ENCODE measurements at regions of chr5 and their contacts with region 1.

Region 1: GRCh38 chr5:39177631-39177964 is 41.8 kb downstream of the FYB1 start:
- DNase-seq: peak; percentile 83
- H3K4me3 Mint-ChIP-seq: peak overlapping the region; percentile 75
- H3K27ac Mint-ChIP-seq: peak overlapping the region; percentile 93
- H3K4me1 Mint-ChIP-seq: peaks cover 88% of the 10 kb centered on the region
- H3K27me3 Mint-ChIP-seq: no peaks in the 10 kb centered on the region

Region 2: GRCh38 chr5:37722236-37723146 is 1455.1 kb before region 1 on chr5:
- intact Hi-C with region 1: loop called (anchors 5 kb)
- DNase-seq: peak; percentile 83
- H3K4me3 Mint-ChIP-seq: peak overlapping the region; percentile 81
- H3K27ac Mint-ChIP-seq: peak overlapping the region; percentile 95
- H3K4me1 Mint-ChIP-seq: peaks cover 29% of the 10 kb centered on the region
- H3K27me3 Mint-ChIP-seq: no peaks in the 10 kb centered on the region

Region 3: DNA sequence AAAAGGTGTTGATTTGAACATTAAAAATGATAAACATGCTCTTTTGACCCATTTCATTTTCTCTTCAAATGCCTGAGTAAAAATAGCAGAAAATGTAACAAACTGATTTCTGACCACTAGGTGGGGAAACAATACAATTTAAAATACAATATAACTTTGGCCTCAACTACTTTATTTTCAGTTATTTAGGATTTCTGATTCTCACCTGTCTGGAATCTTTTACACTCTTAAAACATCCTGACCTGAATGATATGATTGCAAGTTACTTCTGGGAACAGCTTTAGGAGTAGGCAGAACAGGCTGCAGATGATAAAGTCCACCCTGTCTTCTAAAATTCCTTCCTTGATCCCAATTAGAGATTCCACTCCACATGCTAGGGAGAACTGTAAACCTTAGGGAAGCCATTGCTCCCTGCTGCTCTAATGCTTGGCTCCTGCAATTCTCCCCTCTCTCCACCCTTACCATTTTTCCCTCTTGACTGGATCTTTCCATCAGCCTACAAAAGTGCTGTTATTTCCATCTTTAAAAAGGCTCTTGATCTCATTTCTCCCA is 28.5 kb before region 1 on chr5:
- intact Hi-C with region 1: loop called (anchors 1 kb)
- DNase-seq: no peak
- H3K4me3 Mint-ChIP-seq: no peak overlapping the region
- H3K27ac Mint-ChIP-seq: peak overlapping the region; percentile 68
- H3K4me1 Mint-ChIP-seq: peaks cover 43% of the 10 kb centered on the region
- H3K27me3 Mint-ChIP-seq: no peaks in the 10 kb centered on the region

Region 4: DNA sequence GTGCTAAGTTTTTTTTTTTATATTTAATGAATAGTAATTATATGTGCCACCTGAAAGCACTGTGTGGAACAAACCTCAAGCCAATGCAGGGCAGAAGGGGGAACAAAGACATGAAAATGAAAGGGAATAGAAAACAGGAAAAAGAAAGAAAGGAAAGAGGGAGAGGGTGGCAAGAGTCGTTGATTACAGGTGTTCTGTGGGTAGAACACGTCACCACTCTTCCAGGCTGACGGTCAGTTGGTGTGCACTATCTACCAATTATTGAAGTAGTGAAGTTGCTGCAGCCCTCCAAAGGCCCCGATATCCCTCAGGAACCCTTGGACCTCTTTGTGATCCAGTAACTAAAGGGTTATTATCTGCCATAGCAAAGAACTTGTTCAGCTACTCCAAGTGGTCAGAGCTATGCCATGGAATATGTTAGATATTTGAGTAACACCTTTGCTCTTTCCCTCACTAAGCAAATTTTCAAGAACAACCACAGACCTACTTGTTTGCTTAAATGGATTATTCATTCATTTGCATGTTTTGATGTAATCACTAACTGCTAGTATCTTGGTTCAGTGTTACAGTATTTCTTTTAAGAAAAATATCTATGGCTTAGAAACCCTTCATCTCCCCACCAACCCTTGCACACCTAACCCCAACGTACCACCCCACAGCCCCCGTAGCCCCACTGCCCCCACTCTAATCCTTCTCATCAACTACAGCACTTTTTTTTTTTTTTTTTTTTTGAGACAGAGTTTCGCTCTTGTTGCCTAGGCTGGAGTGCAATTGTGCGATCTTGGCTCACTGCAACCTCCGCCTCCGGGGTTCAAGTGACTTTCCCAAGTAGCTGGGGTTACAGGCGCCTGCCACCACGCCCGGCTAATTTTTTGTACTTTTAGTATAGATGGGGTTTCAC is 10.5 kb after region 1 on chr5:
- intact Hi-C with region 1: loop called (anchors 1 kb)
- DNase-seq: peak; percentile 76
- H3K4me3 Mint-ChIP-seq: peak overlapping the region; percentile 78
- H3K27ac Mint-ChIP-seq: peak overlapping the region; percentile 97
- H3K4me1 Mint-ChIP-seq: peaks cover 81% of the 10 kb centered on the region
- H3K27me3 Mint-ChIP-seq: no peaks in the 10 kb centered on the region

Region 5: GRCh38 chr5:39209924-39210323 is 32.3 kb after region 1 on chr5:
- intact Hi-C with region 1: loop called (anchors 1 kb)
- DNase-seq: peak; percentile 95
- H3K4me3 Mint-ChIP-seq: peak overlapping the region; percentile 75
- H3K27ac Mint-ChIP-seq: peak overlapping the region; percentile 92
- H3K4me1 Mint-ChIP-seq: peaks cover 79% of the 10 kb centered on the region
- H3K27me3 Mint-ChIP-seq: no peaks in the 10 kb centered on the region

Measured in activated CD4-positive, alpha-beta T cell treated with anti-CD3 and anti-CD28 coated beads, Interleukin-2, amount 10 ng/mL, durations not matched to agents 24 days and 14 days (primary cell).